CD8-positive, alpha-beta T cell (primary cell): ENCODE measurements at regions of chr13 and their contacts with region 1.

Region 1: GRCh38 chr13:50081679-50082425 is 66.6 kb downstream of the KCNRG start:
- DNase-seq: peak; percentile 97 to 99 (median 98)
- ATAC-seq: peak; percentile 69
- H3K4me3 ChIP-seq: peak overlapping the region; percentile 79
- H3K4me3 Mint-ChIP-seq: peak overlapping the region; percentile 95
- H3K27ac ChIP-seq: peak overlapping the region; percentile 61 to 85
- H3K27ac Mint-ChIP-seq: peak overlapping the region; percentile 95
- H3K4me1 ChIP-seq: peaks cover 29% of the 10 kb centered on the region
- H3K4me1 Mint-ChIP-seq: peaks cover 43% of the 10 kb centered on the region
- H3K27me3 ChIP-seq: peaks cover under 1 to 29% of the 10 kb centered on the region in 2 experiments
- H3K27me3 Mint-ChIP-seq: peaks cover 15% of the 10 kb centered on the region
- CTCF ChIP-seq: no peak

Region 2: DNA sequence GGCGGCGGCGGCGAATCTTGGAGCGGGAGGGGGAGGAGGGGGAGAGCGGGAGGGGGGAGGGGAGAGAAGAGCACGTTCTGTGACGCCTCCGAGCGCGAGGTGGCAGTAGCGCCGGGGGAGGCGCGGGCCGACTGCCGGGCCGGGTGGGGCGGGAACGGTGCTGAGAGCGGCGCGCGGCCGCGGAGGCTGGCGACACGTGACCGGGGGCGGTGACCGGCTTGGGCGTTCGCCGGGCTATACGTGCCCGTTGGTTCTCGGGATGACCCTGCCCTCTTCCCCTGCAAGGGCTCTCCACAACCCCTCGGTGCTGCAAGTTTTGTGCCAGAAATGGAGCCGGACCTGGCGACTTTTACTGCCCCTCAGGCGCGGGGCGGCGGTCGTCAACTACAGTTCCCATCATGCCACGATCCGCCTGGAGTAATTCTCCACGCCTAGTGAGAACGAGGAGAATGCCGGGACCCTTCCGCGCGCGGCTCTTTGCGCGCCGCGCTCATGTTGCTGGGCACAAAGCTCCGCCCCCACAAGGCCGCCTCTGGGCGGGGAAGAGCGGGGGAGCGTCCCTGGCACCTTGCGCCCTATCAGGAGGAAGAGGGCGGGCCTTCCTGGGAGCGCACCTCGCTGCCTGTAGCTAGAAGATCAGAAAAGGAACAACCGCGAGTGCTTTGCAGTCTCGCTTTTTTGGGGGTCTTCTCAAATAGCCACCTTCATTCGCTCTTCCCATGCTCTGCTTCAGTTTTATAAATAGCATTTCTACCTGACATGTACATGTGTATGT is 289.1 kb before region 1 on chr13 and contains the start of gene KPNA3:
- CTCF ChIA-PET with region 1: no interaction called
- POLR2A ChIA-PET with region 1: no interaction called
- intact Hi-C with region 1: loop called (anchors 1 to 5 kb)
- DNase-seq: peak; percentile 92 to 98 (median 96)
- ATAC-seq: peak; percentile 91
- H3K4me3 ChIP-seq: peak within 1 kb of the TSS; percentile 83 to 99
- H3K4me3 Mint-ChIP-seq: peak within 1 kb of the TSS; percentile 95
- H3K27ac ChIP-seq: peak within 1 kb of the TSS; percentile 79 to 89
- H3K27ac Mint-ChIP-seq: peak within 1 kb of the TSS; percentile 96
- H3K4me1 ChIP-seq: peaks cover 21% of the 10 kb centered on the region
- H3K4me1 Mint-ChIP-seq: peaks cover 34% of the 10 kb centered on the region
- H3K27me3 ChIP-seq: peaks cover 0 to 7% of the 10 kb centered on the region in 2 experiments
- H3K27me3 Mint-ChIP-seq: peaks cover 9% of the 10 kb centered on the region
- CTCF ChIP-seq: no peak
- total RNA-seq, gene KPNA3: 22.3 to 23.5 TPM

Region 3: DNA sequence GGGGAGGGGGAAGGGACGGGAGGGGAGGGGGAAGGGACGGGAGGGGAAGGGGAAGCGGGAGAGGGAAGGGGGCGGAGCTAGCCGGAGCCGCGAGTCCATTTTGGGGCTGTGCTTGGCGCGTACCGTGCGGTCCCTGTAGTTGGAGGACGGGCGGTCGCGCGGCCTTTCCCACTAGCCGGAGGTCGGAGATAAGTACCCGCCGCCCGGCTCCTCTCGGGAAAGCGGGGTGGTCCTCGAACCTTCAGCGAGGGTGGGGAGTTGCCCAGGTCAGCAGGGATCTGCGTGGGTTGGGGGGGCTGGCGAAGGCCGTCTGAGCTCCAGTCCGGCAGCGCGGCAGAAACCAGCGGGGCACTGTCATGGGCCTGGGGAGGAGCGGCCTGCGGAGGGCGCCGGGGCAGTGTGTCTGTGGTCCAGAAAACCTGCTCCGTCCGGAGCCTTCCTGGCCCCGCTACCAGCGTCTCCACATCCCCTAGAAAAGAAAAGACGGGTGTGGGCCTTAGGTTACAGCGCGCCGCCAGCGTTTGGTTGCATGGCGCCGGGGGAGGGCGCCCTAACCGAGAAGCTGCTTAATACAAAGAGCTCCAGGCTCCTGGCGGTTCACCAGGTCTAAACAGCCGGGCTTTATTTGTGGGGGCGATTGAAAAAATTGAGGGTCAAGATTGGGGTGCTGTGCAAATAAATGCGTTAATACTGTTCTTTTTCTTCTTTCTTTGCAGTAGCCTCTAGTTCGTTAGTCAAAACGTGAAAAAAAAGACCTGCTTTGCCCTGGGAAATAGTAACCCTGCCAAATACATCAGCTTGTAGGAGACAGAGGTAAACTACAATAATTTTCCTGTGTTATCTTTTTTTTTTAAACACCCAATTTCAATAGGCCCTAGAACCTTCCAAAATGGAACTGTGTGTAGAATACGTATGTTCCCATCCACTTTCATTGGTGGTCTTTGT is 84.6 kb before region 1 on chr13 and contains the start of gene TRIM13:
- CTCF ChIA-PET with region 1: interaction called, 17 read pairs
- POLR2A ChIA-PET with region 1: interaction called, 24 read pairs
- intact Hi-C with region 1: loop called (anchors 1 kb)
- DNase-seq: peak; percentile 72 to 90 (median 81)
- ATAC-seq: peak; percentile 80
- H3K4me3 ChIP-seq: peak within 1 kb of the TSS; percentile 87 to 99
- H3K4me3 Mint-ChIP-seq: peak within 1 kb of the TSS; percentile 86
- H3K27ac ChIP-seq: peak within 1 kb of the TSS; percentile 84 to 85
- H3K27ac Mint-ChIP-seq: peak within 1 kb of the TSS; percentile 86
- H3K4me1 ChIP-seq: peaks cover 27% of the 10 kb centered on the region
- H3K4me1 Mint-ChIP-seq: peaks cover 49% of the 10 kb centered on the region
- H3K27me3 ChIP-seq: no peaks in the 10 kb centered on the region
- H3K27me3 Mint-ChIP-seq: no peaks in the 10 kb centered on the region
- CTCF ChIP-seq: peak; percentile 78
- total RNA-seq, gene TRIM13: 24.0 to 24.4 TPM

Region 4: DNA sequence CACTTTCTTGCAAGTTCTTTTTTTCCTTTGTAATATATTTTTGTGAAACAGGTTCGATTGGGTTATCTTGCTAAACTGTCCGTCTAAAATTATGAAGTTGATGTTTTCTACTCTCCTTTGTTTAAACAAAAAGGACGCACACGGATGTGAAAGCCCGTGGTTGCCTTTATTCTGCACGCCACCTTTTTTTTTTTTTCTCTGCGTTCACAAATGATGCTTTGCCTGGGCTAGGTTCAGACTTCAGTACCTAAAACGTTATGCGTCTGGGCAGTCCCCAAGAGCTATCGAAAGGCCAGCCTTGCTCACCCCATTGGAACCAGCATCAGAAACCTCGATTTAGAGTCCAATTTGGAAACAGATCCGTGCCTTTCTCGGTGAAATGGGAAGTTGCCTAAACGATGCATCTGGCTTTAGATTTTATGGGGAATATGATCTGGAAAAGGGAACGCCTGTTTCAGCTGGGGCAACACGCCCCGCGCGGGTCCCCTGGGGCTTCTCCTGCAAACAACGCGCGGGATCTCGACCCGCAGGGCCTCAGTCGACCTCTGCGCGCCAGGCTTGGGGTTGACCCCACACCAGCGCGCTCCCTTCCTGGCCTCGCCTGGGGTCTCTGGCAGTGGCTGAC is 47.3 kb after region 1 on chr13:
- CTCF ChIA-PET with region 1: interaction called, 112 read pairs
- POLR2A ChIA-PET with region 1: interaction called, 164 read pairs
- intact Hi-C with region 1: loop called (anchors 1 kb)
- DNase-seq: peak in 2 of 9 experiments; percentile 44 to 64
- ATAC-seq: no peak
- H3K4me3 ChIP-seq: no peak overlapping the region
- H3K4me3 Mint-ChIP-seq: peak overlapping the region; percentile 50
- H3K27ac ChIP-seq: no peak overlapping the region
- H3K27ac Mint-ChIP-seq: peak overlapping the region; percentile 32
- H3K4me1 ChIP-seq: peaks cover 53% of the 10 kb centered on the region
- H3K4me1 Mint-ChIP-seq: peaks cover 48% of the 10 kb centered on the region
- H3K27me3 ChIP-seq: peaks cover 55 to 60% of the 10 kb centered on the region in 2 experiments
- H3K27me3 Mint-ChIP-seq: peaks cover 59% of the 10 kb centered on the region
- CTCF ChIP-seq: no peak

Region 5: DNA sequence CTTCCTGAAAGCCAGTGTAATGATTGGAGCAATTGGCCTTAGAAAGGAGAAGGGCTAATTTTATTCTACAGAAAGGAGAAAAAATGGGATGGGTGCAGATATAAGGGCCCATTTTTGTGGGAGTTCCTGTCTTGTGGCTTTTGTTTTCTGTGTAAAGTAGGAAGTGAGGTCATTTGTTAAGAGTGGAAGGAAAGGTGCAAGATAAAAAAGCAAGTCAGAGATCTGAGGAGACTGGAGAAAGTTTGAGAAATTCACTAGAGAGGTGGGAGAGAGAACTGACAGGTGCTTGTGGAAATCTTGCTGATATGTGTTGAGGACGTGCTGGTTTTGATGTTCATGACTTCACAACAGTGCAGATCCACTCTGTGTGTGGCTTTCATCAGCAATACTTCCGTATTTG is 412.3 kb after region 1 on chr13:
- CTCF ChIA-PET with region 1: no interaction called
- POLR2A ChIA-PET with region 1: no interaction called
- intact Hi-C with region 1: no loop called
- DNase-seq: no peak
- ATAC-seq: no peak
- H3K4me3 ChIP-seq: no peak overlapping the region
- H3K4me3 Mint-ChIP-seq: no peak overlapping the region
- H3K27ac ChIP-seq: no peak overlapping the region
- H3K27ac Mint-ChIP-seq: no peak overlapping the region
- H3K4me1 ChIP-seq: no peaks in the 10 kb centered on the region
- H3K4me1 Mint-ChIP-seq: no peaks in the 10 kb centered on the region
- H3K27me3 ChIP-seq: no peaks in the 10 kb centered on the region
- H3K27me3 Mint-ChIP-seq: peaks cover 5% of the 10 kb centered on the region
- CTCF ChIP-seq: no peak

Region 6: DNA sequence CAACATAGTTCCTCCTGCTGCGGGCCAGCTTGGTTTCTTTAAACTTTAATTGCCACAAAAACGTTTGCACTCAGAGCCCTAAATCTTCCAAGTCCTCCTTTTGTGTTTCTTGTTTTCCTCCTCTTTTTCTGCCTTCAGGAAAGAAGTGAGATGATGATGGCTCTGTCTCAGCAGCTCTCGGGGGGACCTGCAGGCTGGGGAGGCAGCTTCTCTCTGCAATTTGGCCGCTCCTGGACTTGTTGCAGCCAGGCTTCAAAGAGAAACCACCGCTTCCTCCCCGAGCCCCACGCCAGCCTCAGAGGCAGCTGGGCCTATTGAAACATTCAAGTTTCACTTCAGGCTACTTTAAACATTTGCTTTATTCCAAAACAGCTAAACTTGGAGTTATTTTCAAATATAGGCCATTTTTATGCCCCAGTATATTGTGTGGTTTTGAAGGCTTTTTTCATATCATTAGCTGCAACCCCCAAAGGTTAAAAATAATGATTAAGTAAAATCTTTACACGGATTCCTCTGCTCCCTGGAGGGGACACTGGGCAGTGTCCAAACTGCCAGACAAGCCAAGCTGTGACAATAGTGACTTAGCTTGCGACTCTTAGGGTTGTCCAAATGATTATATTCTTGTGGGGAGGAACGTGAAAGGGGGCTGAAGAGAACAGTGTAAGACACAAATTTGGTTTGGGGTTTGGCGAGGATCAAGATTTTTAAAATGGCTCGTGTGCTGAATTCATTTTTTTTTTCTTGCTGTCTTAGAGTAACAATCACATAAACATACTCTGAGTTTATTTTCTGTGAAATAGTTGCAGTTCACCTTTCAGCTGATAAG is 430.8 kb after region 1 on chr13:
- CTCF ChIA-PET with region 1: interaction called, 3 read pairs
- POLR2A ChIA-PET with region 1: no interaction called
- intact Hi-C with region 1: loop called in 1 of 2 experiments (anchors 10 kb)
- DNase-seq: peak; percentile 16 to 73 (median 36)
- ATAC-seq: peak; percentile 62
- H3K4me3 ChIP-seq: peak overlapping the region; percentile 40 to 53
- H3K4me3 Mint-ChIP-seq: no peak overlapping the region
- H3K27ac ChIP-seq: peak overlapping the region; percentile 51 to 71
- H3K27ac Mint-ChIP-seq: no peak overlapping the region
- H3K4me1 ChIP-seq: peaks cover 18% of the 10 kb centered on the region
- H3K4me1 Mint-ChIP-seq: no peaks in the 10 kb centered on the region
- H3K27me3 ChIP-seq: no peaks in the 10 kb centered on the region
- H3K27me3 Mint-ChIP-seq: no peaks in the 10 kb centered on the region
- CTCF ChIP-seq: no peak

Region 7: DNA sequence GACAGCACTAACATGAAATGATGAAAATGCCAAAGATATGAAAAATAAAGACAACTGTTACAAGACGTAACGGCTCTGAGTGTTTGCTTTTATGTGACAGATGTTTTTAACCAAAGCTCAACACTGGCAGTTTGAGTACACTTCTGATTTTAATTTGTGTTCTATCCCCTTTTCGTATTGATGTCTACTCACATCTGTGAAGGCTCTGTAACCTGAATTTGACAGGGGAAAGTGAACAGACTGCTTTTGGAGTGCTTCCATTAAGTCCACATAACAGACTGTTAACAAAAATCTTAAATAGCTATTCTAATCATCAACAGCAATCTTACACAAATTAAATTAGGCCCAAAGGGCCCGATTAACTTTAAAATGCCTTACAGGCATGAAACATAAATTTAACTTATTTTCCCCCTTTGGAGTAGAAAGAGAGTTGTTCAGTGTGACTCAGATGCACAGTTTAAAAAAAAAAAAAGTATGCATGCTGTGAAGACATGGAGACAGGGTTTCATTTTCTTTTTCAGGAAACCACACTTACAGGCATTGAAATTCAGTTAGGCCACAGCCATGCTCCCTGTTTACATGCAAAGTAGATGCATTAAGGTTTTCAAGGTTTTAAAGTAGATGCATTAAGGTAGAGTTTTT is 811.5 kb after region 1 on chr13:
- CTCF ChIA-PET with region 1: no interaction called
- POLR2A ChIA-PET with region 1: no interaction called
- intact Hi-C with region 1: loop called in 1 of 2 experiments (anchors 5 kb)
- DNase-seq: peak in 5 of 9 experiments; percentile 16 to 80 (median 53)
- ATAC-seq: peak; percentile 95
- H3K4me3 ChIP-seq: peak overlapping the region; percentile 26 to 30
- H3K4me3 Mint-ChIP-seq: peak overlapping the region; percentile 80
- H3K27ac ChIP-seq: peak overlapping the region; percentile 46 to 86
- H3K27ac Mint-ChIP-seq: peak overlapping the region; percentile 91
- H3K4me1 ChIP-seq: peaks cover 27% of the 10 kb centered on the region
- H3K4me1 Mint-ChIP-seq: peaks cover 42% of the 10 kb centered on the region
- H3K27me3 ChIP-seq: no peaks in the 10 kb centered on the region
- H3K27me3 Mint-ChIP-seq: no peaks in the 10 kb centered on the region
- CTCF ChIP-seq: no peak